GM12878 (cell line): ENCODE measurements at regions of chr3 and their contacts with region 1.

Region 1: DNA sequence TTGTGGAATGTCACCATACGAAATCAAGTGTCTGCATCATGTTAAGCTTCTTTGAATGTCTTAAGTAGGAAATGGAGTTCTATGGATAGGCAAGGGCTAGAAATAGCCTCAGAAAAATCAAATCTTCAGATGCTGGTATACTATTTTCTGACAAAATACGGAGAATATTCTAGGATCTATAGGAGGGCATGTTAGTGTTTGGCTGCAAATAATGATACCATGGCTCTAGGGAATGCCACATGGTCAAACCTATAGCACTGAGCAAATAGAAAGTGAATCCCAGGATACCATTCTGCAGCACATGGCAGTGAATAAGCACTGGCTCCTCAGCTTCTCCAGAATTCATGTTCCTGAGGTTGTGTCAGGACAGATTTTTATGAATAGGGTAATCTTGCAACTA is 22.8 kb downstream of the SCAANT1 start:
- DNase-seq: no peak
- ATAC-seq: no peak
- H3K4me3 ChIP-seq: no peak overlapping the region
- H3K27ac ChIP-seq: no peak overlapping the region
- H3K4me1 ChIP-seq: no peaks in the 10 kb centered on the region
- H3K27me3 ChIP-seq: no peaks in the 10 kb centered on the region
- CTCF ChIP-seq: no peak
- EP300 ChIP-seq: no peak
- POLR2A ChIP-seq: no peak
- RAD21 ChIP-seq: no peak

Region 2: GRCh38 chr3:63693351-63693971 is 196.0 kb before region 1 on chr3:
- CTCF ChIA-PET with region 1: no interaction called
- POLR2A ChIA-PET with region 1: no interaction called
- RAD21 ChIA-PET with region 1: no interaction called
- SMC1A ChIA-PET with region 1: no interaction called
- in situ Hi-C with region 1: no loop called
- intact Hi-C with region 1: no loop called
- DNase-seq: no peak
- ATAC-seq: no peak
- H3K4me3 ChIP-seq: no peak overlapping the region
- H3K27ac ChIP-seq: no peak overlapping the region
- H3K4me1 ChIP-seq: no peaks in the 10 kb centered on the region
- H3K27me3 ChIP-seq: no peaks in the 10 kb centered on the region
- CTCF ChIP-seq: no peak
- EP300 ChIP-seq: no peak
- POLR2A ChIP-seq: no peak
- RAD21 ChIP-seq: no peak

Region 3: DNA sequence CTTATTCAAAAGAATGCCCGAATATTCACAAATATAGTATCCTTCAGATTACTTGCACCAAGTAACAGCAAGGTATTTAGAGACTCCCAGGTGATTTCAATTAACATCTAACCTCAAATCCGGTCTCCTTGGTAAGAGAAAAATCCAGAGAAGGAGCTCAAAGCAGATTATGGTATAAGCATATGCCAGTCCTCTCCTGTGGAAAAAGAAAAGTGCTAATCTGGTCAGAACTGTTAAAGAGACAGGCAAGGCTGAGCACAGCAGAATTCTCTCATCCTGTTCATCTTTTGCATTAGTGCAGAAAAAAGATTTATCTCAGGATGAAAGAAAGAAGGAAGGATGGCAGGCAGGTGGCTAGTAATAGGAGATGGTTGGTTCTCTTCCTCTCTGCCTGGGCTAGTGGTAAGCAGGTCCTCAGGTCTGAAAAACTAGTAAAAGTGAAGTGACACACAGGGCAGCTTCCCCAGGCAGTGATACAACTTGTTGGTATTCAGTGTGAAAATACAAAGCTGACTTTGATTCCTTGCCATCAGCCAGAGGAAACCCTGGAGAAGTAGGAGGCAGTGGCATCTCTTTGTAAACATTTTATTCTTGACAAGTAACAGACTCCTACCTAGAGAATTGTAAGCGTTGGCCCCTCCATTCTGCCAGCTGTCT is 11.6 kb before region 1 on chr3:
- CTCF ChIA-PET with region 1: interaction called, 8 read pairs
- POLR2A ChIA-PET with region 1: interaction called, 6 read pairs
- RAD21 ChIA-PET with region 1: no interaction called
- SMC1A ChIA-PET with region 1: interaction called, 14 read pairs
- in situ Hi-C with region 1: no loop called
- intact Hi-C with region 1: no loop called
- DNase-seq: no peak
- ATAC-seq: no peak
- H3K4me3 ChIP-seq: no peak overlapping the region
- H3K27ac ChIP-seq: no peak overlapping the region
- H3K4me1 ChIP-seq: no peaks in the 10 kb centered on the region
- H3K27me3 ChIP-seq: no peaks in the 10 kb centered on the region
- CTCF ChIP-seq: no peak
- EP300 ChIP-seq: no peak
- POLR2A ChIP-seq: no peak
- RAD21 ChIP-seq: no peak